Activated naive CD4-positive, alpha-beta T cell treated with anti-CD3 and anti-CD28 coated beads, Interleukin-2, amount 10 ng/mL, durations not matched to agents 7 days and 5 days (primary cell): ENCODE measurements at regions of chr16 and their contacts with region 1.

Region 1: DNA sequence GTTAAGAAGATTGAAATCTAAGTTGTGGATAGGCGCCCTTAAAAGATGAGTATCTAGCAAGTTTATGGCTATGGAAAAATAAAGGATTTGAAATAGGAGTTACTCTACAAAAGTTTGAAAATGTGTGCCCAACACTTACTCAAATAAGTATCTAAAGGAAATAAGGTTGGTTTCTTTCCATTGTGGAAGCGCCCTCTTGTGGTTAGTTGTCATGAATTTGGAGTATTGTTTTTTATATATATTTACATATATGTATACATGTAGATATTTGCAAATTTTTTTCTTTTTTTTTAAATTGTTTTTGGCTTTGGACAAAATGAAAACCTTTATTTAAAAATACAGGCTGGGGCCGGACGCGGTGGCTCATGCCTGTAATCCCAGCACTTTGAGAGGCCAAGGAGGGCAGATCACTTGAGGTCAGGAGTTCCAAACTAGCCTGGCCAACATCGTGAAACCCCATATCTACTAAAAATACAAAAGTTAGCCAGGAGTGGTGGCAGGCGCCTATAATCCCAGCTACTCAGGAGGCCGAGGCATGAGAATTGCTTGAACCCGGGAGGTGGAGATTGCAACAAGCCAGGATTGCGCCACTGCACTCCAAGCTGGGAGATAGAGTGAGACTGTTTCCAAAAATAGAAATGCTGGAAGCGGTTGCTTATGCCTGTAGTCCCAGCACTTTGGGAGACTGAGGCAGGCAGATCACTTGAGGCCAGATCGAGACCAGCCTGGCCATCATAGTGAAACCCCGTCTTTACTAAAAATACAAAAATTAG is 24.0 kb upstream of the VPS4A start:
- DNase-seq: peak; percentile 48
- H3K4me3 Mint-ChIP-seq: no peak overlapping the region
- H3K27ac Mint-ChIP-seq: no peak overlapping the region
- H3K4me1 Mint-ChIP-seq: no peaks in the 10 kb centered on the region
- H3K27me3 Mint-ChIP-seq: no peaks in the 10 kb centered on the region

Region 2: DNA sequence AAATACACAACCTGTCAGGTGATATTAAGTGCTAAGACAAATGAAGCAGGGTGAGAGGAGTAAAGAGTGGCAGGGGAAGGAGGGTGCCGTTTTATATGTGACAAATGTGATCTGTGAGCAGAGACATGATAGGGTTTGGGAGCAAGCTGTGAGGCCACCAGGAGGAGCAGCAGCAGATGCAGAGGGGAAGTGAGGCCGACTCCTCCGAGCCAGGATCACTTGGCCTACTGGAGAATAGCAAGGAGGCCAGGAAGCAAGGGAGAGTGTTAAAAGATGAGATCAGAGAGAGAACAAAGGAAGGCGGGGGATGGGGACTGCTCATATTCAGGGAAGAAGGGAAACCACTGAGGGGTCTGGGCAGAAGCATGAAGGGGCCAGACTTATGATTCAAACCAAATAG is 314.4 kb before region 1 on chr16:
- CTCF ChIA-PET with region 1: no interaction called
- DNase-seq: no peak
- H3K4me3 Mint-ChIP-seq: no peak overlapping the region
- H3K27ac Mint-ChIP-seq: no peak overlapping the region
- H3K4me1 Mint-ChIP-seq: peaks cover 4% of the 10 kb centered on the region
- H3K27me3 Mint-ChIP-seq: no peaks in the 10 kb centered on the region

Region 3: DNA sequence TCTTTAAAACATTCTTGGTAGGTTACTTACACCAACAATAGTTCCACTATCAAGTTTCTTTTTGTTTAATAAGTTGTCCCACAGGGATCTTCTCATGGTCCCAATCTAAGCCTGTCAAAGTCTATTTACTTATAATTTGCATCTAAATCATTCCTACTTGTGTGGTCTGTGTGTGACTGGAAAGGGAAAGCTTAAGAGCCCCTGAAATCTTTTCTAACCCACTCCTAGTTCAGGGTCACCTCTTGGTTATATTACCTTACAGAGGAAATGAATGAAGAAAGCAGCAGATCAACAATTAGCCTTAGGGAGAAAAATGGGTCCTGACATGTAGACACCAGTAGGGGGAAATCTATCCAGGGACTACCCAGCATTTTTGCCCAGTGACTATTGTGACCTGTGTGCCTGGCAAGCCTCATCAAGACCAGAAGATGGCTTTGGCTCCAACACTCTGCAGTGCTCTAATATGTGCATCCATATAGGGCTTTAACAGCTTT is 292.1 kb before region 1 on chr16:
- CTCF ChIA-PET with region 1: no interaction called
- DNase-seq: no peak
- H3K4me3 Mint-ChIP-seq: no peak overlapping the region
- H3K27ac Mint-ChIP-seq: no peak overlapping the region
- H3K4me1 Mint-ChIP-seq: no peaks in the 10 kb centered on the region
- H3K27me3 Mint-ChIP-seq: no peaks in the 10 kb centered on the region

Region 4: DNA sequence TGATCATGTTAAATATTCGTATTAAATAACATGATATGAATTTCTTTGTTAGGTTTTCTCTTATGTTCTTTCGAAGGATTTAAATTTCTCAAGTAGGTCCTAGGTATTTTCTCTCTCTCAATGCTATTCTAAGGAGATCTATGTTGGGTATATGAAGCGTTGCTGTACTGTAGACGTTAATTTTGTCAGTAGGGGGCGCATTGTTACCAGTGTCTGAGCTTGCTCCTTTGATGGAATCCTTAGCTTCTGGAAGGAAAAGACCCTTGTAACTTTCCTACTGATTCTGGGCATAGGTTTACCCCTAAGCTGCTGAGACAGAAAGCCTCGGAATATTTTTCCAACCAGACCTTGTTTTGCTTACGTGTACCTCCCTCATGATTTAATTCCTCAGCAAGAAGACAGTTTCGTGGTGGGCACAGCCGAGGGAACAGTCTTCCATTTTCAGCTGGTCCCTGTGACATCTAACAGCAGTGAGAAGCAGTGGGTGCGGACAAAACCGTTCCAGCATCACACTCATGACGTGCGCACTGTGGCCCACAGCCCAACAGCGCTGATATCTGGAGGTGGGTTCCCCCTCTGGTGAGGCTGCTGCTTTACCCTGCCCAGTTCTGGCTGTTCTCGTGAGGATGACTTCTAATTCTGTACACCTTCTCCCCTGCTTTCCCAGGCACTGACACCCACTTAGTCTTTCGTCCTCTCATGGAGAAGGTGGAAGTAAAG is 136.8 kb before region 1 on chr16:
- CTCF ChIA-PET with region 1: interaction called, 119 read pairs
- DNase-seq: peak; percentile 70
- H3K4me3 Mint-ChIP-seq: no peak overlapping the region
- H3K27ac Mint-ChIP-seq: no peak overlapping the region
- H3K4me1 Mint-ChIP-seq: no peaks in the 10 kb centered on the region
- H3K27me3 Mint-ChIP-seq: no peaks in the 10 kb centered on the region

Region 5: DNA sequence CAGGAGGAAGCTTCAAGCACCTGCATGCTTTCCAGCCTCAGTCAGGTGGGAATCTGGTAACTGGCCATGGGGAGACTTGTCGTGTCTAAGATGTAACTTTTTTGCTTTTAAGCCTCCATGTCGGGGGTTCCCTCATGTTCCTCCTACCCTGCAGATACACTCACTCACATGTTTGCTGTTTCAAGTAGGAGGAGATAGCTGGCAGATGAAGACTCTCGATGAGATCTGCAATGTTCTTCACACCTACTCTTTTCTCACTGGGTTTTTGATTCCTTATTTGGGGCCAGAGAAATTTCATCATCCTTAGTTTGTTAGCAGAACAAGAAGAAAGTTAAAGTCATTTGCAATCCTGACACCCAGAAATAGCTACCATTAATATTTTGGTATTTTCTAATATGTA is 129.9 kb before region 1 on chr16:
- CTCF ChIA-PET with region 1: interaction called, 119 read pairs
- DNase-seq: no peak
- H3K4me3 Mint-ChIP-seq: no peak overlapping the region
- H3K27ac Mint-ChIP-seq: no peak overlapping the region
- H3K4me1 Mint-ChIP-seq: no peaks in the 10 kb centered on the region
- H3K27me3 Mint-ChIP-seq: no peaks in the 10 kb centered on the region

Region 6: GRCh38 chr16:69166221-69166833 is 120.8 kb before region 1 on chr16:
- CTCF ChIA-PET with region 1: interaction called, 19 read pairs
- DNase-seq: peak; percentile 69
- H3K4me3 Mint-ChIP-seq: no peak overlapping the region
- H3K27ac Mint-ChIP-seq: peak overlapping the region; percentile 82
- H3K4me1 Mint-ChIP-seq: peaks cover 27% of the 10 kb centered on the region
- H3K27me3 Mint-ChIP-seq: no peaks in the 10 kb centered on the region